Transverse colon (tissue), 4 donors: ENCODE measurements at regions of chr3 and their contacts with region 1.

Region 1: GRCh38 chr3:186277268-186277909 is 84.6 kb downstream of the DGKG start:
- DNase-seq: no peak
- H3K4me3 ChIP-seq: no peak overlapping the region
- H3K27ac ChIP-seq: no peak overlapping the region
- H3K4me1 ChIP-seq: peaks cover 0 to 8% (median 0%) of the 10 kb centered on the region in 4 donors
- H3K27me3 ChIP-seq: no peaks in the 10 kb centered on the region
- CTCF ChIP-seq: peak in 4 of 5 experiments; percentile 23 to 34 (median 26)
- EP300 ChIP-seq: no peak
- POLR2A ChIP-seq: no peak

Region 2: DNA sequence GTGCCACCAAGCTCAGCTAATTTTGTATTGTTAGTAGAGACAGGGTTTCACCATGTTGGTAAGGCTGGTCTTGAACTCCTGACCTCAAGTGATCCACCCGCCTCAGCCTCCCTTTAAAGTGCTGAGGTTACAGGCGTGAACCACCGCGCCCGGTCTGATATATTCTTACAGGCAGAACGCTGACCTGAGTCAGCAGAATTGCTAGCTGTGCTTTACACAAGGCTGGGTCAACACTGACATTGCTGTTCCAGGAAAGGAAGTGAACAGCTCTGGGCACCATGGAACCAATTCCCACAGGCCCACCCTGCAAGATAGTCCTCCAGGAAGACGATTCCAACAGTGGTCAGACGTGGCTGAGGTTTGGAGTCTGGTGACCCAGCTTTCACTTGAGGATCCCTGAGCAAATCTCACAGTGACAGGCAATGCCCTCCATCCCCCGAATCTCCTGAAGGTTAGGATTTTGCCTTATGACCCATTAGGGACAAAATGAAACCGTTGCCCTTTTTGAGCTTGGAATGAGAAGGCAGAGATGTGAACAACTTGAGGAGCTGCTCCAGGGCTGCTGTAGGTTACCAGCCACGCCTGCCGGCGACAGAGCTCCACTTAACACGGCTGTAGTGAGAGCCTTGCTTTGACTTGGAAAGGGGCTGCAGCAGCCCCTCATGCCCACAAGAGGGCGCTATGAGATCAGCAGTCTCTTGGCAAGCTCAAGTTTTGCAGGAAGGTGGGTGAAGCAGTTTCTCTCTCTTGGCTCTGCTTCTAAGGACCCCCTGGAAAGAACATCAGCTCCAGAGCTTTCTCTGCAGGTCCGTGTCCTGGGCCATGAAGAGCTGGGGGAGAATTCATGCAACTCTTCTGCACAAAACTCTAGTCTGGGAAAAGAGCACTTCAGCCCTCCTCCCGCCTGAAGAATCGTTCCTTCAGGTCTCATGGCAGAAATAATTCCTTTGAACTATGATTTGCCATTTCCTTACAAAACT is 617.2 kb before region 1 on chr3:
- in situ Hi-C with region 1: no loop called
- intact Hi-C with region 1: loop called (anchors 10 kb)
- DNase-seq: peak; percentile 82
- H3K4me3 ChIP-seq: no peak overlapping the region
- H3K27ac ChIP-seq: peak overlapping the region; percentile 24 to 66 (median 42)
- H3K4me1 ChIP-seq: peaks cover 3 to 19% (median 17%) of the 10 kb centered on the region in 4 donors
- H3K27me3 ChIP-seq: no peaks in the 10 kb centered on the region
- CTCF ChIP-seq: peak; percentile 90 to 96 (median 94)
- EP300 ChIP-seq: no peak
- POLR2A ChIP-seq: no peak

Region 3: GRCh38 chr3:186365202-186365974 is 88.0 kb after region 1 on chr3:
- in situ Hi-C with region 1: no loop called
- intact Hi-C with region 1: no loop called
- DNase-seq: no peak
- H3K4me3 ChIP-seq: no peak overlapping the region
- H3K27ac ChIP-seq: peak overlapping the region in 2 of 4 donors; percentile 29 to 38
- H3K4me1 ChIP-seq: peaks cover 0 to 26% (median 9%) of the 10 kb centered on the region in 4 donors
- H3K27me3 ChIP-seq: peaks cover 45% of the 10 kb centered on the region
- CTCF ChIP-seq: no peak
- EP300 ChIP-seq: no peak
- POLR2A ChIP-seq: no peak

Region 4: DNA sequence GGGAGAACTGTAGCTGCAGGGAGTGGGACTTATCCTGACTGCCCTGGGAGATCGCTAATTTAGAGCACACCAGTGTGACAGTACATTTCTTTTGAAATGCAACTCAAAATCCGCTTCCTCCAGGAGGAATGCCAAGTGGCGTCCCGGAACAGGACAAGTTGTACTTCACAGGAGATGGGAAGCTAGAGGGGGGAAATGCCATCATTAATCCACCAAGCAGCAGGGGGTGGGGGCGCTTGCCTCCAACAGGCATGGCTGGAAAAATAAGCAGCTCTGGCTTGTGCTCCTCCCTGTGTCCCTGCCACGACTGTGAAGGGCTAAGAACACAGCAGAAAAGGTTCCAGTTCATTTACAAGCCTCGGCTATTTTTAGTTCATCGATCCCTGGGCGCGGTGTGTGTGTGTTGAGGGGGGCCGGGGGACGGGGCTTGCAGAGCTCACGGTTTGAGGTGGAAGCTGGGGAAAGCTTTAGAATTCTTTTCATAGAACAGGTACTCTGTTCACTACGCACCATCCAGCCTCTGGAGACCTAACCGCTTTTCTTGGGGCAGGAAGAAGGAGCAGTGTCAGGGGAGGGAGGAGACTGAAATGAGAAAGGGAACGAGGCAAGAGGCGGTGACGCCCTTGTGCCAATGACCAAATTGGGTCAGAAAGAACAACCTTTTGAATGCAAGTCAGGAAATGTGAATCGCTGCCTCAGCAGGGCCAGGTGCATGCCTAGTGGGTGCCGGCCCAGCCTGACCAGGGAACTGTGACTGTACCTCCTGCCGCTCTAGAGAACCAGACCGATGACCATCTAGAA is 136.4 kb after region 1 on chr3:
- in situ Hi-C with region 1: no loop called
- intact Hi-C with region 1: no loop called
- DNase-seq: peak; percentile 38
- H3K4me3 ChIP-seq: peak overlapping the region in 3 of 4 donors; percentile 10 to 36 (median 11)
- H3K27ac ChIP-seq: peak overlapping the region; percentile 58 to 76 (median 64)
- H3K4me1 ChIP-seq: peaks cover 9 to 21% (median 16%) of the 10 kb centered on the region in 4 donors
- H3K27me3 ChIP-seq: no peaks in the 10 kb centered on the region
- CTCF ChIP-seq: no peak
- EP300 ChIP-seq: peak; percentile 78
- POLR2A ChIP-seq: no peak